Common myeloid progenitor, CD34-positive (primary cell): ENCODE measurements at regions of chr5 and their contacts with region 1.

Region 1: DNA sequence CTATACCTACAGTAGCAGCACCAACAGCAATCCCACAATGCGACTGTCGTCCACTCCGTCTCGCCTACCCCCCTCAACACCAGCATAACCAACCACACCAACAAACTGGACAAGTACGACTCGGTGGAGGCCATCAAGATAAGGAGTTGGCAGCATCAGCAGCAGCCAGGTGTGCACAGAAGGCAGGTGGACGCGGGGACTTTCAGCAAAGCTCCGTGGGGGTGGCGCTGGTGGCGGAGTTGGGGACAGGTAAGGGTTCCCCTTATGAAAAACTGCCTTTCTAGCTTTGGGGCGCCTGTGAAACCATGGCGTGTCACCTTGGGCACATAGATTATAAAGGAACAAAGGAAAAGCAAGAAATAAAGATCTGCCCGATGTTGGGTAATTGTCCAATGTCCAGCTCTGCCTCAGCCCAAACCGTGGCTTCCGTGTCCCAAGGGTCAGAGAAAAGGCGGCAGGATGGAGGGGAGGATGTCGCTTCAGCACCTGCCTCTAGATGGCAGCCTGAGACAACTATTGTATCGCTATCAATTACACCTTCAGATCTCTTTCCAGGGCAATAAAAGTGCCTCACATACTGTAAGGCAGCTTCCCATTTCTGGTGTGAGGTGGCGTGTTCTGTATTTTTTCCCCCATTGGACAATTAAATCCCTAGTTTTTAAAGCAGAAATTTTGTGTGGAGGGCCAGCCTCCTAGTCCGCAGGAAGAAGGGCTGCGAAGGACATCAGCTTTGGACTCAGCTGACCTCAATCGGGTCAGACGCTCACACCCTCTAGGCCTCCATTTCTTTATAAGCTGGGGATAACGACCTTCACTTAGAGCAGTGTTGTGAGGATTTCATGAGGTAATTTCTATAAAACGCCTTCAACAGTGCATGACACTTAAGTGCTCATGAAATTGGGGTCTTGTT is 58.8 kb downstream of the MTRR start:
- DNase-seq: peak; percentile 25 to 59 (median 47)
- H3K4me3 ChIP-seq: no peak overlapping the region
- H3K27ac ChIP-seq: no peak overlapping the region
- H3K4me1 ChIP-seq: no peaks in the 10 kb centered on the region
- H3K27me3 ChIP-seq: peaks cover 0 to 5% (median 3%) of the 10 kb centered on the region in 5 experiments

Region 2: GRCh38 chr5:7955476-7955875 is 27.8 kb after region 1 on chr5:
- CTCF ChIA-PET with region 1: interaction called, 11 read pairs
- POLR2A ChIA-PET with region 1: no interaction called
- DNase-seq: no peak
- H3K4me3 ChIP-seq: no peak overlapping the region
- H3K27ac ChIP-seq: no peak overlapping the region
- H3K4me1 ChIP-seq: no peaks in the 10 kb centered on the region
- H3K27me3 ChIP-seq: no peaks in the 10 kb centered on the region

Region 3: GRCh38 chr5:9207817-9208418 is 1280.2 kb after region 1 on chr5:
- CTCF ChIA-PET with region 1: interaction called, 15 read pairs
- POLR2A ChIA-PET with region 1: no interaction called
- DNase-seq: peak; percentile 52 to 74 (median 62)
- H3K4me3 ChIP-seq: no peak overlapping the region
- H3K27ac ChIP-seq: no peak overlapping the region
- H3K4me1 ChIP-seq: no peaks in the 10 kb centered on the region
- H3K27me3 ChIP-seq: no peaks in the 10 kb centered on the region